Ovary (tissue), 10 donors: ENCODE measurements at regions of chr13 and their contacts with region 1.

Region 1: DNA sequence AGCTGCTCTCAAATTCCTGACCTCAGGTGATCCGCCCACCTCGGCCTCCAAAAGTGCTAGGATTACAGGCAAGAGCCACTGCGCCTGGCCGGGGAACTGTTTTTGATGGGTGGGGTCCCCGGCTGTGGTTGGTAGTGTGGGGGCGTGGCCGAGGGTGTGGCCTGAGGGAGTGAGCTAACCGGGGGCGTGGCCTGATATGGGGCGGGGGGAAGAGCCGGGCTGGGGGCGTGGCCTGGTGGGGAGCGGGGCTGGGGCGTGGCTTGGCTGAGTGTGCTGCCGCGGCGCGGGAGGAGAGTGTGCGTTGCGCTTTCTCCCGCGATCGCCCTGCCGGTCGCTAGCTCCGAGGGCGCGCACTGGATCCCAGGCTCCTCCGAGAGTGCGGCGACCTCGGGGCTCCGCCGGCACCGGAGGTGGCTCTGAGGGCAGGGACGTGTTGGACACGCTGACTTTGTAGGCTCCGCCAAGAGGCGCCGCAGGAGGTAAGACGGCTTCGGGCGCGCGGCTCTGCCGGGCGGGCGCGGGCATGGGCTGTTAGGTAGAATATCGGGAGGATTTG is at the start of gene SPATA13:
- DNase-seq: peak; percentile 97 to 98 (median 97)
- H3K4me3 ChIP-seq: peak within 1 kb of the TSS; percentile 75
- H3K27ac ChIP-seq: peak within 1 kb of the TSS; percentile 43 to 50
- H3K4me1 ChIP-seq: peaks cover 7% of the 10 kb centered on the region
- H3K27me3 ChIP-seq: no peaks in the 10 kb centered on the region
- CTCF ChIP-seq: no peak
- EP300 ChIP-seq: no peak
- POLR2A ChIP-seq: peak; percentile 54
- total RNA-seq, gene SPATA13: 21.7 to 60.3 (median 33.8) TPM

Region 2: DNA sequence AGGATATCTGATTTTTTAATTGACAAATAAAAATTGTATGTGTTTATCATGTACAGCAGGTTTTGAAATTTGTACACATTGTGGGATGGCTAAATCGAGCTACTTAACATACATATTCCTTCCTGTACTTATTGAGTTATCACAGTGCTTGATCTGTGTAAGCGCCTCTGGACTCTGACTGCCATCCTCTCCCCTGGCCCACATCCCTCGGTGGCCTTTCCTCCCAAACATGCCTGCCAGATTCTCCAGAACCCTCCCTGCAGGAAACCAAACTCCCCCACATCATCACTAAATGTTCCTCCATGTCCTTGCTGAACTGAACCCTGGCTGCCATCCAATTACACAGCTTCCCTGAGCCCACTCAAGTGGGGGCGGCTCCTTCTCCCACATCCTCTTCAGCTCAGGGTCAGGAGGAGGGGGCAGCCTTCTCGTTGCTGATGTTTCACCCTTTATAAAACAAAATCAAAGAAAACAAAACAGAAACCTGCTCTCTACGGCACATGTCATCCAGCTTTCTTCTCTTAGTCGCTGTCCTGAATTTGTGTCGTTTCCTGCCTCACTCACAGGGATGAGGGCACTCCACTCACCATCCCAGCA is 97.2 kb before region 1 on chr13:
- intact Hi-C with region 1: loop called in 1 of 4 experiments (anchors 10 kb)
- DNase-seq: peak; percentile 67 to 81 (median 78)
- H3K4me3 ChIP-seq: no peak overlapping the region
- H3K27ac ChIP-seq: peak overlapping the region in 1 of 2 donors; percentile 67
- H3K4me1 ChIP-seq: peaks cover 15% of the 10 kb centered on the region
- H3K27me3 ChIP-seq: no peaks in the 10 kb centered on the region
- CTCF ChIP-seq: no peak
- EP300 ChIP-seq: no peak
- POLR2A ChIP-seq: no peak

Region 3: DNA sequence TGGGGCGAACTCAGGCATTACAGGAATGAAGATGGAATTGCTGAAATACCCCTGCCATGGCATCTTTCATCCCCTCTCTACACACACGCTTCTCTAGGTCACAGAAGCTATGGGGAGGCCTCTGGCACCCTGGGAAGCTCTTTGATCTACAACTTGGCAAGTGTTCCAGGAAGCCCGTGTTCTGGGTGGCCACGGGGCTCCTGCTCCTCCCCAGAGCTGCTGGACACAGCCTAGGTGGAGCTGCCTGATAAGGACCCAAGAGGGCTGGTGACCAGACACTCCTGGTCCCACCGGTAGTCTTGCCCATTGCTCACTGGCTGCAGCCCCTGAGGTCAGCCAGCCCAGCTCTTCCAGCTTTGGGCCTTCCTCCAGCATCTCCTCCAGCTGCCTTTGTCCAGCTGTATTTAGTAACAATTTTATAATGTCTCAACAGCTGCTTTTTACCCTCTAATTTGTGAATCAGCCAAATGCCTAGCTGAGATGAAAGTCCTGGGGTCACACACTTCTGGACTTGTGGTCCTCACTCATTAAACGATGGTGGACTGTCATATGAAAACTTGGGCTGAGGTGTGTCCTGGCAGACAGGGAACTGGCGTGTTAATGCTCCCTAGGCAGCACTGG is 72.8 kb before region 1 on chr13:
- intact Hi-C with region 1: loop called in 1 of 4 experiments (anchors 5 kb)
- DNase-seq: peak in 4 of 5 donors; percentile 47 to 59 (median 52)
- H3K4me3 ChIP-seq: no peak overlapping the region
- H3K27ac ChIP-seq: peak overlapping the region in 1 of 2 donors; percentile 28
- H3K4me1 ChIP-seq: peaks cover 15% of the 10 kb centered on the region
- H3K27me3 ChIP-seq: no peaks in the 10 kb centered on the region
- CTCF ChIP-seq: no peak
- EP300 ChIP-seq: no peak
- POLR2A ChIP-seq: no peak